ENCODE measurements at regions of chr12 and their contacts with region 1.

Region 1: GRCh38 chr12:92363295-92364146 is 217.9 kb upstream of the BTG1 start:
- DNase-seq: peak; percentile 40
- H3K4me3 Mint-ChIP-seq: peak overlapping the region; percentile 51
- H3K27ac Mint-ChIP-seq: peak overlapping the region; percentile 70
- H3K4me1 Mint-ChIP-seq: peaks cover 47% of the 10 kb centered on the region
- H3K27me3 Mint-ChIP-seq: no peaks in the 10 kb centered on the region

Region 2: GRCh38 chr12:92398565-92399309 is 35.2 kb after region 1 on chr12:
- CTCF ChIA-PET with region 1: no interaction called
- POLR2A ChIA-PET with region 1: interaction called, 20 read pairs
- DNase-seq: no peak
- H3K4me3 Mint-ChIP-seq: peak overlapping the region; percentile 18
- H3K27ac Mint-ChIP-seq: peak overlapping the region; percentile 77
- H3K4me1 Mint-ChIP-seq: peaks cover 84% of the 10 kb centered on the region
- H3K27me3 Mint-ChIP-seq: no peaks in the 10 kb centered on the region

Measured in activated CD4-positive, alpha-beta memory T cell treated with anti-CD3 and anti-CD28 coated beads, Interleukin-2, amount 10 ng/mL, durations not matched to agents 7 days and 5 days (primary cell).